Activated CD4-positive, alpha-beta T cell treated with anti-CD3 and anti-CD28 coated beads for 36 hours (primary cell): ENCODE measurements at regions of chr2 and their contacts with region 1.

Region 1: GRCh38 chr2:78896531-78896930 is 129.0 kb upstream of the REG3G start:
- DNase-seq: no peak
- ATAC-seq: no peak
- H3K4me3 Mint-ChIP-seq: no peak overlapping the region
- H3K27ac Mint-ChIP-seq: no peak overlapping the region
- H3K4me1 Mint-ChIP-seq: no peaks in the 10 kb centered on the region
- H3K27me3 Mint-ChIP-seq: no peaks in the 10 kb centered on the region

Region 2: DNA sequence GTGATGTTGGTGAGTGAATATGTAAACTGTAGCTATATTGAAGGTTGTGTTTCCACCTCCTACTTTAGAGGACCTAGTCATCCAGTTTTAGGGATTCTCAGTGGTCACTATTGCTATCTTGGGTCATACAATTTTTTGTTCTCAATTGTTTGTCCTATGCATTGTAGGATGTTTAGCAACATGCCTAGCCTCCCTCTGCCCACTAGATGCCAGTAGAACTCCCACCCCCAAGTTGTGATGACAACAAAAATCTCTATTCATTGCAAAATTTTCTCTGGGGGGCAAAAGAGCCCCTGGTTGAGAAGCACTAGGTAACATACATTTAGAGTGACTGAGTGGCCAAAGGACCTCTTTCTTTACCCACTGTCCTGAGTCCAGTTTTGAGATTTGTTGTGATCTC is 1461.7 kb before region 1 on chr2:
- CTCF ChIA-PET with region 1: no interaction called
- POLR2A ChIA-PET with region 1: no interaction called
- intact Hi-C with region 1: no loop called
- DNase-seq: no peak
- ATAC-seq: no peak
- H3K4me3 Mint-ChIP-seq: no peak overlapping the region
- H3K27ac Mint-ChIP-seq: no peak overlapping the region
- H3K4me1 Mint-ChIP-seq: no peaks in the 10 kb centered on the region
- H3K27me3 Mint-ChIP-seq: no peaks in the 10 kb centered on the region

Region 3: DNA sequence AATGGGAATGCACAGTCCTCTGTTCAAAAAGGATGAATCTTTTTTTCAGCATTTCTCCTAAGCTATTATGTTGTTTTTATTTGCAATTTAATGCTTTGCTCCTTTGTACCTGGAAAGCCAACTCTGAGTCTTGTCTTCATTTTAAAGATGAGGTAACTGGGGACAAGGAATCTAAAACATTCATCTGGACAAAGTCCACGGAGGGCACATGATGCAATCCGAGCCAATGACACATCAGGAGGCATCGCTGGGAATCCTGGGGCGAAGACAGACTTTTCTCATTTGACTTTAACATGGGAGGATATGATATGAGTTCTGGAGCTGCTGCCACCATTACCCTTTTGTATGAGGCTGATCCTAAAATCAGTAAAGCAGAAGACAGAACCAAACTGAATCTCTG is 12.4 kb after region 1 on chr2:
- CTCF ChIA-PET with region 1: no interaction called
- POLR2A ChIA-PET with region 1: no interaction called
- intact Hi-C with region 1: loop called in 1 of 2 experiments (anchors 1 kb)
- DNase-seq: no peak
- ATAC-seq: no peak
- H3K4me3 Mint-ChIP-seq: no peak overlapping the region
- H3K27ac Mint-ChIP-seq: no peak overlapping the region
- H3K4me1 Mint-ChIP-seq: no peaks in the 10 kb centered on the region
- H3K27me3 Mint-ChIP-seq: no peaks in the 10 kb centered on the region